ENCODE measurements at regions of chr19 and their contacts with region 1.

Region 1: GRCh38 chr19:1672038-1672768 is 19.8 kb upstream of the TCF3 start:
- DNase-seq: peak; percentile 59
- H3K4me3 Mint-ChIP-seq: peak overlapping the region; percentile 21
- H3K27ac Mint-ChIP-seq: no peak overlapping the region
- H3K4me1 Mint-ChIP-seq: peaks cover 16% of the 10 kb centered on the region
- H3K27me3 Mint-ChIP-seq: peaks cover 52% of the 10 kb centered on the region

Region 2: DNA sequence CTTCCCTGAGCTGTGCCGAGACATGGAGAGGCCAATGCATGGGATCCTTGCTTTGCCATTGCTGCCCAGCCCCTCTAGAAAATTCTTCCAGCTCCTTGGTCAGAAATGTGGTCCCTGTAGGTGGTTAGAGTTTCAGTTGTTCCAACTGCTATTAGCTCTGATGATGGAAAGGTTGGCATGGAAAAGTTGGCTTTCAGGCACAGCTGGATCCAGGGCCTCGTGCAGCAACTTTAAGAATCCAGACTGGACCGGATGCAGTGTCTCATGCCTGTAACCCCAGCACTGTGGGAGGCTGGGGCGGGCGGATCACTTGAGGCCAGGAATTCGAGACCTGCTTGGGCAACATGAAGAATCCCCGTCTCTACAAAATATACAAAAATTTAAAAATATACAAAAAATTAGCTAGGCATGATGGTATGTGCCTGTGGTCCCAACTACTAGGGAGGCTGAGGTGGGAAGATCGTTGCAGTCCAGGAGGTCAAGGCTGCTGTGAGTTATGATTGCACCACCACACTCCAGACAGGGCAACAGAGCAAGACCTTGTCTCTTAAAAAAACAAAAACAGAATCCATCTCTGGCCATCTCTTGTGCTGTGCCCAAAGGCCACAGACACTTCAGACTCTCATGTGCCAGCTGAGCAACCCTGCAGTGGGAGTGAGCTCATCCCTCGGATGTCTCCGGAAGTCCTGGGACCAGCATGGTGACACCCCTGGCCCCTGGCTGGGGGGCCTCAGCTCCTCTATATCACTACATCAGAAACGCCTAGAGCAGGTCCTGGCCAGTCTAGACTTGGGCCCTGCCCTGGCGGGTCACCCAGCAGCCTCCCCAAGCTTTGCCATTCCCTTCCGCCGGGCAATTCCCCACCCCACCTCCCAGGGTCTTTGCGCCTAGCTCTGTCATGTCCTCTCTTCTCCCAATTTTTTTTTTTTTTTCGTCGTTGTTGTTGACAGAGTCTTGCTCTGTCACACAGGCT is 120.8 kb before region 1 on chr19:
- CTCF ChIA-PET with region 1: interaction called, 13 read pairs
- intact Hi-C with region 1: loop called (anchors 1 kb)
- DNase-seq: no peak
- H3K4me3 Mint-ChIP-seq: no peak overlapping the region
- H3K27ac Mint-ChIP-seq: no peak overlapping the region
- H3K4me1 Mint-ChIP-seq: no peaks in the 10 kb centered on the region
- H3K27me3 Mint-ChIP-seq: peaks cover 12% of the 10 kb centered on the region

Region 3: DNA sequence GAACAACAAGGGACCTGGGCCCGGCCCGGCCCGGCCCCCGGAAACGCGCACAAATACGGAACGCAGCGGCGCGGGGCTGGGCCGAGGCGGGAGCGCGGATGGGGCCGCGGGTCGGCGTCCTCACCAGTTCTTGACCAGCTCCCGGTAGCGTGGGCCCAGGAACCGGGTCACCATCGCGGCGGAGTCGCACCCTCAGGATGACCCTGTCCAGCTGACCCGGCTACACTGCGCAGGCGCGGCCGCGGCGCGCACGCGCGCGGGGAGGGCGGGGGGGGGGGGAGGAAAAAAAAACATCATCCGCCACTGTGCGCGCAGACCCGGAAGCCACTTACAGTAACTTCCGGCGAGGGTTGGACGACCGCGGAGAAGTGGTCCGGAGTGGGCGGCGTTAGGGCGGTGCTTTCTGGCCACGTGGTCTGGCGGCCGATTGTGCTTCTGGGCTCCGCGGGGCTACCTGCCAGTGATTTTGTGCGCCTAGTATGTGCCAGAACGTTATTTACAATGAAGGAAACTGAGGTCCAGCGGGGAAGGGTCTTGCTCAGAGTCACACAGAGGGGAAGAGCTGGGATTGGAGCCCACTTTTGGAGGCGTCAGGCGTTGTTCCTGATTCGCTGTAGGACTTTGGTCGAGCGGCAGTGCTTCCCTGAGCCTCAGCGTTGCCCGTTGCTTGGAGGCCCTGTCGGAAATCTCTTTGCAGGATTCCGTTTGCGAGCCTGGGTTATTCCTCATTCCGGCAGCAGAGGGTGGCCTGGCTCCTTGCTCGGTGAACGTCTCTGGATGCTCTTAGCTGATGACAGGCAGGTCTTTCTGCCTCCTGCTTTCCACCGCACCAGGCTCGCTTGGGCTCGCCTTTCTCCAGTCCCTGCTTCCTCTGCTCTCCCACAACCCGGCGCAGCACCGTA is 66.7 kb before region 1 on chr19 and contains the start of gene UQCR11:
- CTCF ChIA-PET with region 1: interaction called, 13 read pairs
- intact Hi-C with region 1: loop called (anchors 1 kb)
- DNase-seq: peak; percentile 94
- H3K4me3 Mint-ChIP-seq: peak within 1 kb of the TSS; percentile 98
- H3K27ac Mint-ChIP-seq: peak within 1 kb of the TSS; percentile 97
- H3K4me1 Mint-ChIP-seq: peaks cover 48% of the 10 kb centered on the region
- H3K27me3 Mint-ChIP-seq: no peaks in the 10 kb centered on the region
- total RNA-seq, gene UQCR11: 281 to 293 TPM

Region 4: GRCh38 chr19:1767464-1767933 is 95.3 kb after region 1 on chr19:
- CTCF ChIA-PET with region 1: interaction called, 42 read pairs
- intact Hi-C with region 1: loop called (anchors 1 kb)
- DNase-seq: peak; percentile 65
- H3K4me3 Mint-ChIP-seq: no peak overlapping the region
- H3K27ac Mint-ChIP-seq: no peak overlapping the region
- H3K4me1 Mint-ChIP-seq: no peaks in the 10 kb centered on the region
- H3K27me3 Mint-ChIP-seq: peaks cover 70% of the 10 kb centered on the region

Region 5: DNA sequence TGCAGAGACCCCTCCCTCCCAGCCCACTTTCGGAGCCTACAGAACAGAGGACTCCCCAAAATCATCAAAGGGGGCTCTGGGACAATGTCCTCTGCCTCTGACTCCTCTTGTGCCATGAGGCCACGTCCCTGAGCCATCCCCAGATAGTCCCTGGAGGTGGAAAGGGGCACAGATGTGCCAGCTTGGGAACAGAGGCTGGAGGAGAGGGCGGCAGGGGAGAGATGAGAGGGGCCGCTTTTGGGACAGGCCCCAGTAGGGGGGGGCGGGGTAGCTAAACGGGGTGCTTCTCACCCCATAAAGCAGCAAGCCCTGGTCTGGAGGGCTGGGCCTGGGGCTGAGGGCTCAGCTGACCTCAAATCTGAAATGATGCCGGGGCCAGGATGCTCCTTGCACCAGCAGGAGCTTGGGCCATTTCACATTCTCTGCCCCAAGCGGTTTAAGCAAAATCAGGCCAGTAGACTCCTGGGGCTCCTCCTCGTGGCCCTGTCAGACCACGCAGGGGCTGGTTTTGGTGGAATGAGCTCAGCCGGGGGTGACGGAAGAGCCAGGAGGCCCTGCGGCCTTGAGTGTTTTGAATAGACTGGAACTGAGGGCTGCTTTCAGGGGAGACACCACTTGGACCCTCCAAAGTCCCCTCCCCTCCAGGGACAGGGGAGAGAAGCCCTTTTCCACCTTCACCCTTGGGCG is 108.2 kb after region 1 on chr19:
- CTCF ChIA-PET with region 1: interaction called, 10 read pairs
- intact Hi-C with region 1: no loop called
- DNase-seq: no peak
- H3K4me3 Mint-ChIP-seq: no peak overlapping the region
- H3K27ac Mint-ChIP-seq: no peak overlapping the region
- H3K4me1 Mint-ChIP-seq: no peaks in the 10 kb centered on the region
- H3K27me3 Mint-ChIP-seq: peaks cover 56% of the 10 kb centered on the region